Ovary (tissue), 10 donors: ENCODE measurements at regions of chr10 and their contacts with region 1.

Region 1: DNA sequence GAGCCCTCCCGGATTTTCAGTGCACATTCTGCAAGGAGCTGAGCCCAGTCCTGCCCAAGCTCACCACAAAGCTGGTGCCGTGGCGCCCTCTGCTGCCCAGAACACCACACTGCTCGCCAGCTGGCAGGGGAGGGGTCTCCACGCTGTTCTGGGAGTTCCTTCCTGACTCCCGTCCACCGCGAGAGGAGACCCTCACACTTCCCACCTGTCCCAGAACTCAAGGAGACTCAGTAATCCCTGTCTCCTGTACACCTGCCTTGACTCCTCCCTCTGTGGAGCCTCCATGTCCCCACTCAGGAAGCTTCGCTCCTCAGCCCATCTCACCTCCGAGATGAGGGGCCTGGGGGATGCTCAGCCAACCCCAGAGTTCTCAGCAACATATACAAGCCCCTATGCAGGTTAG is 11.3 kb downstream of the C10orf105 start:
- DNase-seq: peak; percentile 48 to 83 (median 74)
- H3K4me3 ChIP-seq: no peak overlapping the region
- H3K27ac ChIP-seq: no peak overlapping the region
- H3K4me1 ChIP-seq: peaks cover 6% of the 10 kb centered on the region
- H3K27me3 ChIP-seq: no peaks in the 10 kb centered on the region
- CTCF ChIP-seq: peak; percentile 65 to 87 (median 67)
- EP300 ChIP-seq: no peak
- POLR2A ChIP-seq: no peak

Region 2: GRCh38 chr10:71314028-71314693 is 394.1 kb before region 1 on chr10:
- intact Hi-C with region 1: loop called in 2 of 4 experiments (anchors 5 to 10 kb)
- DNase-seq: peak; percentile 64 to 77 (median 77)
- H3K4me3 ChIP-seq: no peak overlapping the region
- H3K27ac ChIP-seq: peak overlapping the region; percentile 41 to 79
- H3K4me1 ChIP-seq: peaks cover 15% of the 10 kb centered on the region
- H3K27me3 ChIP-seq: no peaks in the 10 kb centered on the region
- CTCF ChIP-seq: peak; percentile 48 to 85 (median 70)
- EP300 ChIP-seq: no peak
- POLR2A ChIP-seq: no peak

Region 3: GRCh38 chr10:71390461-71390835 is 317.9 kb before region 1 on chr10:
- intact Hi-C with region 1: loop called in 3 of 4 experiments (anchors 2 to 5 kb)
- DNase-seq: peak in 1 of 5 donors; percentile 11
- H3K4me3 ChIP-seq: no peak overlapping the region
- H3K27ac ChIP-seq: no peak overlapping the region
- H3K4me1 ChIP-seq: no peaks in the 10 kb centered on the region
- H3K27me3 ChIP-seq: no peaks in the 10 kb centered on the region
- CTCF ChIP-seq: no peak
- EP300 ChIP-seq: no peak
- POLR2A ChIP-seq: no peak

Region 4: DNA sequence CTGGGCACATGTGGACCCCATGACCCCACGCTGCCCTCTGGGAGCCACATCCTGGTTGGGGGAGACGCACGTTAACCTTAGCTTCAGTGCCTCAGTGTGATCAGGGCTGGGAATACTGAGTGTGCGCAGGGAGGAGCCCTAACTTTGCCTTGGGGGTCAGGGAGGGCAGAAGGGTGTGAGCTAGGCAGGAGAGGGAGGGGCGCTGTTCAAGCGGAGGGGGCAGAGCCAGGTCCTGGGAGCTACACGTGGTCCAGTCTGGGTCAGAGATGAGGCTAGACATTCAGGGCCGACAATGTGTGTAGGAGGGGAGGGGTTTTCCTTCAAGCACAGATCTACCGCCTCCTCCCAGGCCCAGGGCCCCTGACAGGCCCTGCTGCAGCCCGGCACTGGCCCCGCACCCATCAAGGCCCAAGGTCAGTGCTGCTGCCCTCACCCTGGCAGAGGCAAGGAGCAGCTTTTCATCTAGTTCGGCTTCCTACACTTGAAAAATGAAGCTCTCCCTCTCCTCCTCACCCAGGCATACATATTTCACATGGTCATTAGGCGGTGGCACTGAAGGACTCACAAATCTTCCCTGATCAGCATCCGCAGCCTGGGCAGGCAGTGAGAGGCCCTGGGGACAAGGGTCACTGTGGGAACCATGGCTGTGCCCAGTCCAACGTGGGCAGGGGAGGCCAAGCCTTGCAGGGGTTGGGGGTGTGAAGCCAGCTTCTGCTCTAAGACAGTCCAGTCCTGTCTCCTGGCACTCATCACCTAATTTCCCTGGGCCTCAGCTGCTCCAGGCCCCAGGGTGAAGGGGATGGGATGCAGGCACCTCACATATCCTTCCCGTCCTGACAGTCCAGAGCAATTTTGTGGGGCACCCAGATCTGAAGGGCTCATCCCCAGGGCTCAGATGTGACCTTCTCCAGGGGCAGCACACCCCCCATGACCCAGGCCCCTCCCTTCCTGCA is 36.0 kb before region 1 on chr10:
- intact Hi-C with region 1: no loop called
- DNase-seq: no peak
- H3K4me3 ChIP-seq: no peak overlapping the region
- H3K27ac ChIP-seq: no peak overlapping the region
- H3K4me1 ChIP-seq: no peaks in the 10 kb centered on the region
- H3K27me3 ChIP-seq: no peaks in the 10 kb centered on the region
- CTCF ChIP-seq: no peak
- EP300 ChIP-seq: no peak
- POLR2A ChIP-seq: no peak